ENCODE measurements at regions of chr1 and their contacts with region 1.

Region 1: GRCh38 chr1:84433258-84434080 is 35.2 kb downstream of the DNASE2B start:
- DNase-seq: peak; percentile 51 to 63 (median 60)
- H3K4me3 ChIP-seq: peak overlapping the region; percentile 21 to 64 (median 58)
- H3K4me3 Mint-ChIP-seq: peak overlapping the region; percentile 71 to 82
- H3K27ac ChIP-seq: peak overlapping the region in 1 of 2 donors; percentile 88
- H3K27ac Mint-ChIP-seq: peak overlapping the region in 4 of 7 donors; percentile 44 to 76 (median 68)
- H3K4me1 ChIP-seq: peaks cover 51 to 61% of the 10 kb centered on the region in 2 donors
- H3K4me1 Mint-ChIP-seq: peaks cover 19% of the 10 kb centered on the region
- H3K27me3 ChIP-seq: no peaks in the 10 kb centered on the region
- H3K27me3 Mint-ChIP-seq: no peaks in the 10 kb centered on the region
- CTCF ChIP-seq: peak; percentile 87

Region 2: GRCh38 chr1:84174051-84174556 is 259.4 kb before region 1 on chr1:
- intact Hi-C with region 1: no loop called
- DNase-seq: no peak
- H3K4me3 ChIP-seq: no peak overlapping the region
- H3K4me3 Mint-ChIP-seq: no peak overlapping the region
- H3K27ac ChIP-seq: no peak overlapping the region
- H3K27ac Mint-ChIP-seq: no peak overlapping the region
- H3K4me1 ChIP-seq: no peaks in the 10 kb centered on the region
- H3K4me1 Mint-ChIP-seq: peaks cover 6% of the 10 kb centered on the region
- H3K27me3 ChIP-seq: no peaks in the 10 kb centered on the region
- H3K27me3 Mint-ChIP-seq: no peaks in the 10 kb centered on the region
- CTCF ChIP-seq: no peak

Region 3: GRCh38 chr1:84390226-84390625 is 43.2 kb before region 1 on chr1:
- intact Hi-C with region 1: no loop called
- DNase-seq: peak; percentile 8 to 43 (median 18)
- H3K4me3 ChIP-seq: no peak overlapping the region
- H3K4me3 Mint-ChIP-seq: no peak overlapping the region
- H3K27ac ChIP-seq: no peak overlapping the region
- H3K27ac Mint-ChIP-seq: peak overlapping the region in 4 of 7 donors; percentile 9 to 61 (median 35)
- H3K4me1 ChIP-seq: peaks cover 20 to 25% of the 10 kb centered on the region in 2 donors
- H3K4me1 Mint-ChIP-seq: peaks cover 27% of the 10 kb centered on the region
- H3K27me3 ChIP-seq: no peaks in the 10 kb centered on the region
- H3K27me3 Mint-ChIP-seq: no peaks in the 10 kb centered on the region
- CTCF ChIP-seq: no peak

Region 4: DNA sequence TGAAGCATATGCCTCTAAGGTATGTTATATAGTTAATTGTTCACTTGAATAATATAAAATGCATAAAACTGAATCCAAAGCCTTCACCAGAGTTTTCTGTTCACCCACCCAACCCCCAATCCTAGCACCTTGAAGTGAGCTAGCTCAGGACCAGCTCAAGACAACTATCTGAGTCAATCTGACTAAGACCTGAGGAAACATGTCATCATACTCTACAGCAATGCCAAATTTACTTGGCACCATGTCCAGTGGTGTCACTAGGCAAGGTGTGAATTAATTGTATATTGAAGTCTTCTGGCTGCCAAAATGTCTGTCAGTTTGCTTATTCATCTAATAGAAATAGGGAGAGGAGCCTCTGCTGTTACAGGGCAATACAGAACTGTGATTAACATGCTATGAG is 31.4 kb before region 1 on chr1:
- intact Hi-C with region 1: no loop called
- DNase-seq: no peak
- H3K4me3 ChIP-seq: no peak overlapping the region
- H3K4me3 Mint-ChIP-seq: no peak overlapping the region
- H3K27ac ChIP-seq: no peak overlapping the region
- H3K27ac Mint-ChIP-seq: no peak overlapping the region
- H3K4me1 ChIP-seq: peaks cover 6 to 11% of the 10 kb centered on the region in 2 donors
- H3K4me1 Mint-ChIP-seq: peaks cover 6% of the 10 kb centered on the region
- H3K27me3 ChIP-seq: no peaks in the 10 kb centered on the region
- H3K27me3 Mint-ChIP-seq: peaks cover 0 to 1% (median 0%) of the 10 kb centered on the region in 3 donors
- CTCF ChIP-seq: no peak

Region 5: DNA sequence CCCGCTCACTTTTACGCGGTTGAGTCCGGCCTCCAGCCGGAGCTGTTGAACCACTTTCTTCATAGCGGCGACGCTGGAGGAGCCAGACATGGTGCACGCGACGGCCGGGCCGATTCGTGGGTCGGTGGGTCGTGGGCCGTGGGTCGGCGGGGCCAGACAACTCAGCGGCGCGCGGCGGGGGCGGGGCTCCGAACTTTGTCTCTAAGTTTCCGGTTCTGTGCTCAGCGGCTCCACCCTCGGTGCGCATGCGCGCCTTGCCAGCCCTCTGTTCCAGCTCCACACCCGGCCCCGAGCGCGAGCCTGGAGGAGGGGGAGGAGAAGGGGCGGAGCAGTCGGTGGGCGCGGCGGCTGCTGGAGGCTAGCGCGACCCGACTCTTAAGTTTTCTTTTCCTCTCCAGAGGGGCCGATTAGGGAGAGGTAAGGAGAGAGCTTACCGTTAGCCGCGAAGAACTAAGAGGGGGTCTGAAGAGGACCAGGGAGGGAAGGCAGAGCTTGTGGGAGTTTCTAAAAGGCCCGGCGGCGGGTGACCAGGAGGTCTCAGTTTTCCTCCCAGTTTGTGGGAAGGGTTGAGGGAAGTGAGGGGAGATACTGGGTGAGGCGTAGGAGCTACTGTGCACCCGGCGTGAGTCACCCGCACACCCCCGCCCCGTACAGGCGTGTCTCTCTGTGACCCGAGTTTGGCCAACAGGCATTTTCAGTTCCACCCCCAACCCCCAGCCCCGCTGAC is 72.7 kb after region 1 on chr1 and contains the starts of genes GNG5 and SPATA1:
- intact Hi-C with region 1: loop called in 1 of 2 experiments (anchors 5 kb)
- DNase-seq: peak; percentile 95 to 98 (median 98)
- H3K4me3 ChIP-seq: peak within 1 kb of the TSS; percentile 78 to 99 (median 97)
- H3K4me3 Mint-ChIP-seq: peak within 1 kb of the TSS; percentile 98 to 100
- H3K27ac ChIP-seq: peak within 1 kb of the TSS; percentile 94 to 97
- H3K27ac Mint-ChIP-seq: peak within 1 kb of the TSS; percentile 98 to 100 (median 100)
- H3K4me1 ChIP-seq: peaks cover 26 to 42% of the 10 kb centered on the region in 2 donors
- H3K4me1 Mint-ChIP-seq: peaks cover 30% of the 10 kb centered on the region
- H3K27me3 ChIP-seq: no peaks in the 10 kb centered on the region
- H3K27me3 Mint-ChIP-seq: no peaks in the 10 kb centered on the region
- CTCF ChIP-seq: no peak
- polyA plus RNA-seq, gene GNG5: 135 to 555 (median 377) TPM
- polyA plus RNA-seq, gene SPATA1: 0.40 to 1.9 (median 0.43) TPM

Region 6: DNA sequence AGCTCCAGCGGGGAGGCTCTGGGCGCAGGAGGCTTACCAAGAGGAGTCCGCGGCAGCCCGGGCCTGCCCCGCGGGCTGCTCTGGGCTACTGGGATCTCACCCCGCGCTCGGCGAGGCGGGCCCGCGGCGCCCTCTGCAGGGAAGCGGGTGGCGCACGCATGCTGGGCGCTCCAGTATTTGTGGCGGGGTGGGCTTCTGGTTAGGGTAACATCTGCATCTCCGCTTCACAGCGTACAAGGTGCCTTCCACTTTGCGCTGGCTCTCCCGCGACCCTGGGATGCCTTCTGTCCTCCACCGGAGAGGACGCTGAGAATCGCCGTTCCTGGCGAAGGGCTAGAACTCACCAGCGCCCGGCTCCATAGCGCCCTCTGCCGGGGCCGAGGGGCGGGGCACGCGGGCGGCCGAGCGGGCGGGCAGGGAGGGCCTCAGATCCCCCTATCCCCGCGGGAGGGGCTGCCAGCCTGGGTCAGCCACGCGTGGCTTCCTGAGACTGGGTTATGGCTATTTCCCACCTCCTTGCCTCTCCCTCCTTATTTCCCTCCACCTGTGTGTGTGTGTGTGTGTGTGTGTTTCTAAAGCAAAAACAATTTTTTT is 187.3 kb after region 1 on chr1:
- intact Hi-C with region 1: loop called (anchors 5 kb)
- DNase-seq: peak; percentile 64 to 72 (median 65)
- H3K4me3 ChIP-seq: peak overlapping the region; percentile 59 to 85 (median 63)
- H3K4me3 Mint-ChIP-seq: peak overlapping the region; percentile 93 to 97
- H3K27ac ChIP-seq: peak overlapping the region in 1 of 2 donors; percentile 76
- H3K27ac Mint-ChIP-seq: peak overlapping the region; percentile 62 to 98 (median 93)
- H3K4me1 ChIP-seq: peaks cover 5 to 19% of the 10 kb centered on the region in 2 donors
- H3K4me1 Mint-ChIP-seq: peaks cover 16% of the 10 kb centered on the region
- H3K27me3 ChIP-seq: no peaks in the 10 kb centered on the region
- H3K27me3 Mint-ChIP-seq: peaks cover 0 to 8% (median 2%) of the 10 kb centered on the region in 3 donors
- CTCF ChIP-seq: peak; percentile 100